ENCODE measurements at regions of chr4 and their contacts with region 1.

Region 1: DNA sequence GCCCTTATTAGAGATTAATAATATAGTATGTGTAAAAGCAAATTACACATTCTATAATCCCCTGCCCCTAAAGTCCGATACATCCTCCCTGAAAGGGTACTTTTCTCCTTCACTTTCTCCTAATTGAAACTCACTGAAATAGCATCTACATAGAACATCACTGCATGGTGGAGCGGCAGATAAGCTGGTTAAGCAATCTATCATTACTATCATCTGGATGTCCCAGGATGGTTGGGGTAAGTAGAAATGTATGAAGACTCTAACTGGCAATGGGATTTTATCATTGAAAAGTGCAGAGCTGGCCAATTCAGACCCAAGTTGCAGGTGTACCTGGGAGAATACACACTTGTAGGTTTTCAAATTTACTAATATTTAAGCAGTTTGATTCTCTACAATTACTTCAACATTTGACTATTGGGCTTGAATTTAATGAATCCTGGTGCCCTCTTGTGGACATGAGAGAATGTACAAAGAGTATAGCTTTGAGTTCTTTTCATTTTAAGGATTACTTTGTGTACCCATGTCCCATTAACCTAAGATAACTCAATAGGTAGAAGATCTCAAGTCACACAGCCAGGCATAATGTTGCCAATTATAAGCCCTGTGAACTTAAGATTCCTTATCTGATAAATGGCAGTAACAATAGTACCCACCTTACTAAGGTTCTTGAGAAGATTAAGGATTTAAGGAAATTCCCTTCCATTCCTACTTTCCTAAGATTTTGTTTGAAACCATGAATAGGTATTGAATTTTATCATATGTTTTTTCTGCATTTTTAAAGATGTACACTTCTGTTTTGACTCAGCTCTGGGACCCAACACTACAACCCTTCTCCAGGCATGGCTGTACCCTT is 69.8 kb downstream of the SHROOM3 start:
- DNase-seq: peak; percentile 61
- ATAC-seq: peak; percentile 46
- H3K4me3 ChIP-seq: no peak overlapping the region
- H3K27ac ChIP-seq: no peak overlapping the region
- H3K4me1 ChIP-seq: no peaks in the 10 kb centered on the region
- H3K27me3 ChIP-seq: no peaks in the 10 kb centered on the region
- CTCF ChIP-seq: peak; percentile 73

Region 2: DNA sequence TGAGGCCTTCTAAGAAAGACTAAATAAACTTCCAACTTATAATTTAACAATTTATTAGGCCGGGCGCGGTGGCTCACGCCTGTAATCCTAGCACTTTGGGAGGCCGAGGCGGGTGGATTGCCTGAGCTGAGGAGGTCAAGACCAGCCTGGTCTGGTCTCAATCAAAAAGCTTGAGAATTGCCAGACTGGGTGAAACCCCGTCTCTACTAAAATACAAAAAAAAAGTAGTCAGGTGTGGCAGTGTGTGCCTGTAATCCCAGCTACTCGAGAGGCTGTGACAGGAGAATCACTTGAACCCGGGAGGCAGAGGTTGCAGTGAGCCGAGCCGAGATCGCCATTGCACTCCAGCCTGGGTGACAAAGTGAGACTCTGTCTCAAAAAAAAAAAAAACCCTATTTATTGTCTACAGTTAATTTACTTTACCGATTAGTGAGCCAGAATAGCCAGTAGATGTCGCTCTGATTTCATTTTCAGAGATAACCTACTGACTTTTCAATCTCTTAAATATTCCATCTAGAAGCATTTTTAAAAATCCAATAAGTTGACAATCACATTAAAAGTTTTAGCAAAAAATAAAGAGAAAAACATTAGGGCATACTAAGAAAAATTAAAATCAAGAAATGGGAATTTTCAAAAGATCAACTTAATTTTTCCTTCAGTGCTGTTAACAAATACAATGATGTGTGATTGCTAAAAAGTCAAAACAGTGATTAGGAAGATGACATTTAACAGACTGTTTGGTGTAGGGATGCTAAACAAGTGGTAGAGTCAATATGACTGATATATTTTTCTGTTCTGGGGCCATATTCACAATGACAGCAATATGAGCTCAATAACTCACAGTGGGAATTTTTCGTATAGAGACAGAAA is 74.1 kb before region 1 on chr4:
- CTCF ChIA-PET with region 1: interaction called, 4 read pairs
- POLR2A ChIA-PET with region 1: no interaction called
- intact Hi-C with region 1: loop called (anchors 1 kb)
- DNase-seq: peak; percentile 71
- ATAC-seq: peak; percentile 43
- H3K4me3 ChIP-seq: peak overlapping the region; percentile 37; the same call in 1 of the 2 replicates
- H3K27ac ChIP-seq: no peak overlapping the region
- H3K4me1 ChIP-seq: 0 out of 2 replicates have a peak, but pooled peaks cover 3% of the 10 kb centered on the region
- H3K27me3 ChIP-seq: no peaks in the 10 kb centered on the region
- CTCF ChIP-seq: peak; percentile 76

Region 3: DNA sequence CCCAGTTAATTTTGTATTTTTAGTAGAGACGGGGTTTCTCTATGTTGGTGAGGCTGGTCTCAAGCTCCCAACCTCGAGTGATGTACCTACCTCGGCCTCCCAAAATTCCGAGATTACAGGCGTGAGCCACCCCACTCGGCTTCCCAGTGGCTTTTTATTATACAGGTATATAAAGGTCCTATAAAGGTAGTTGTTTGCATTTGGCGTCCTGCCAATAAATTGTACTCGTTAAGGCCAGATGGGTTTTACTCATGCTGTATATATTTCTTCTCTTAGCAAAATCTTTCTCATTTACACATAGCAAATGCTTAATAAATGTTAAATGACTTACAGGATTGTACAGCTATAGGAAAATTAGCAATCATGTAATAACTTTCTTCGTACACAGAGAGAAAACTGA is 63.0 kb before region 1 on chr4:
- CTCF ChIA-PET with region 1: no interaction called
- POLR2A ChIA-PET with region 1: no interaction called
- intact Hi-C with region 1: no loop called
- DNase-seq: no peak
- ATAC-seq: no peak
- H3K4me3 ChIP-seq: no peak overlapping the region
- H3K27ac ChIP-seq: no peak overlapping the region
- H3K4me1 ChIP-seq: no peaks in the 10 kb centered on the region
- H3K27me3 ChIP-seq: no peaks in the 10 kb centered on the region
- CTCF ChIP-seq: no peak

Region 4: DNA sequence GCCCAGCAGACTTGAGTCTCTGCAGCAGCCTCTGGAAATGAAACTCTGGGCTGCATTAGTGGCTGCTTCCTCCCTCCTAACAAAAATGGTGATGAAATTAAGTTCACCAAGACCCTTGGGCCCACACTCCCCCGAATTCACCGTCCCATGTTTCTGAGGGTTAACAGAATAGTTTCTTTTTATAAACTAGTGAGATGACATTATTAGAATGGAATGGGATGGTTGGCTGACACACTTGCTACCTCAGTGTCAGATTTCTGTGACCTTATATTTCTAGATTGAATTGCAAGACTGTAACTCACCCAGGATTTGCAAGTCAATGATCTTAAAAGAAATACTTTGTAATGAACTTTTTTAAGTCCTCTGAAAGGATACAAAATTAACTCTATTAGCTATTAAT is 57.3 kb after region 1 on chr4:
- CTCF ChIA-PET with region 1: no interaction called
- POLR2A ChIA-PET with region 1: no interaction called
- intact Hi-C with region 1: no loop called
- DNase-seq: peak; percentile 69
- ATAC-seq: peak; percentile 62
- H3K4me3 ChIP-seq: peak overlapping the region; percentile 9; the same call in 1 of the 2 replicates
- H3K27ac ChIP-seq: peak overlapping the region; percentile 92
- H3K4me1 ChIP-seq: peaks cover 29% of the 10 kb centered on the region
- H3K27me3 ChIP-seq: no peaks in the 10 kb centered on the region
- CTCF ChIP-seq: no peak

Measured in PC-3 (cell line).